ENCODE measurements at regions of chr11 and their contacts with region 1.

Region 1: GRCh38 chr11:6377902-6378639 is 12.2 kb upstream of the SMPD1 start:
- H3K4me3 ChIP-seq: no peak overlapping the region
- H3K27ac ChIP-seq: no peak overlapping the region
- H3K4me1 ChIP-seq: no peaks in the 10 kb centered on the region
- CTCF ChIP-seq: no peak

Region 2: DNA sequence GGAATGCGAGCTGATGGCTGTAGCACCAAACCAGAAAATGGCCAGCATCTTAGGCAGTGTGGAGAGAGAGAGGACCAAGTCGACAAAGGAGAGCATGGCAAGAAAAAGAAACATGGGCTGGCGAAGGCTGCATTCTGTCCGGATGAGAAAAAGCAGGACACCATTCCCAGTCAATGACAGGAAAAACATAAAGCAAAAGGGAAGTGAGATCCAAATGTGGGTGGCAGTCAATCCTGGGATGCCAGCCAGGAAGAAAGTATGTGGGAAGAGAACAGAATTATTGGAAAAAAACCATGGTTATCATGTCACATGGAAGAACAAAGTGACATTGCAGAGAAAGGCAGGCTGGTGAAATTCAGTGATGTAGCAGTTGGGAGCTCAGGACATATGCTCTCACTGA is 310.6 kb before region 1 on chr11:
- CTCF ChIA-PET with region 1: no interaction called
- POLR2A ChIA-PET with region 1: no interaction called
- H3K4me3 ChIP-seq: no peak overlapping the region
- H3K27ac ChIP-seq: no peak overlapping the region
- H3K4me1 ChIP-seq: no peaks in the 10 kb centered on the region
- CTCF ChIP-seq: no peak

Region 3: GRCh38 chr11:6353367-6353987 is 24.6 kb before region 1 on chr11:
- CTCF ChIA-PET with region 1: interaction called, 20 read pairs
- POLR2A ChIA-PET with region 1: no interaction called
- H3K4me3 ChIP-seq: no peak overlapping the region
- H3K27ac ChIP-seq: no peak overlapping the region
- H3K4me1 ChIP-seq: no peaks in the 10 kb centered on the region
- CTCF ChIP-seq: peak; percentile 86

Region 4: GRCh38 chr11:6400431-6401345 is 22.6 kb after region 1 on chr11:
- CTCF ChIA-PET with region 1: interaction called, 14 read pairs
- POLR2A ChIA-PET with region 1: no interaction called
- H3K4me3 ChIP-seq: no peak overlapping the region
- H3K27ac ChIP-seq: no peak overlapping the region
- H3K4me1 ChIP-seq: no peaks in the 10 kb centered on the region
- CTCF ChIP-seq: no peak

Region 5: GRCh38 chr11:6481012-6481923 is 103.2 kb after region 1 on chr11 and contains the starts of genes ARFIP2 and TIMM10B:
- CTCF ChIA-PET with region 1: interaction called, 27 read pairs
- POLR2A ChIA-PET with region 1: interaction called, 11 read pairs
- H3K4me3 ChIP-seq: peak within 1 kb of the TSS; percentile 73
- H3K27ac ChIP-seq: peak within 1 kb of the TSS; percentile 28
- H3K4me1 ChIP-seq: no peaks in the 10 kb centered on the region
- CTCF ChIP-seq: no peak

Region 6: GRCh38 chr11:6531267-6531752 is 153.2 kb after region 1 on chr11:
- CTCF ChIA-PET with region 1: interaction called, 32 read pairs
- POLR2A ChIA-PET with region 1: no interaction called
- H3K4me3 ChIP-seq: no peak overlapping the region
- H3K27ac ChIP-seq: no peak overlapping the region
- H3K4me1 ChIP-seq: no peaks in the 10 kb centered on the region
- CTCF ChIP-seq: 0 out of 2 replicates have a peak, but pooled peaks have one; percentile 43

Region 7: DNA sequence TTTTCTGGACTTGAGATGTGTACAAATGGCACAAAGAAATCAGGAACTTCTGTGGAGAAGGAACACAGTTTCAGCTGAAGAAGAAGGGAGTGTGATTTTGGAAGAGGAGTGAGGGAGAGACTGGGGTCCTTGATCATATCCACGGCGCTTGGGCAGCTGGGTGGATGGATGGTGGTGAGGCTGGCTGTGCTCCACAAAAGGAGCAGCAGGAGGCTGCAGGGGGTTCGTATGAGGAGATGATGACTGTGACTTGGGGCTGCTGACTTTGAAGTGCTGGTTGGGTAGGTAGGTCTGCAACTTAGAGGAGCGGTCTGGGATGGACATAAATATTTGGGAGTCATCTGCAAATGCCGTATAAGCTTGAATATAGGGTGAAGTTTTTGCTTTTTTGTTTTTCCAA is 278.9 kb after region 1 on chr11:
- CTCF ChIA-PET with region 1: no interaction called
- POLR2A ChIA-PET with region 1: no interaction called
- H3K4me3 ChIP-seq: no peak overlapping the region
- H3K27ac ChIP-seq: no peak overlapping the region
- H3K4me1 ChIP-seq: no peaks in the 10 kb centered on the region
- CTCF ChIP-seq: no peak

Region 8: DNA sequence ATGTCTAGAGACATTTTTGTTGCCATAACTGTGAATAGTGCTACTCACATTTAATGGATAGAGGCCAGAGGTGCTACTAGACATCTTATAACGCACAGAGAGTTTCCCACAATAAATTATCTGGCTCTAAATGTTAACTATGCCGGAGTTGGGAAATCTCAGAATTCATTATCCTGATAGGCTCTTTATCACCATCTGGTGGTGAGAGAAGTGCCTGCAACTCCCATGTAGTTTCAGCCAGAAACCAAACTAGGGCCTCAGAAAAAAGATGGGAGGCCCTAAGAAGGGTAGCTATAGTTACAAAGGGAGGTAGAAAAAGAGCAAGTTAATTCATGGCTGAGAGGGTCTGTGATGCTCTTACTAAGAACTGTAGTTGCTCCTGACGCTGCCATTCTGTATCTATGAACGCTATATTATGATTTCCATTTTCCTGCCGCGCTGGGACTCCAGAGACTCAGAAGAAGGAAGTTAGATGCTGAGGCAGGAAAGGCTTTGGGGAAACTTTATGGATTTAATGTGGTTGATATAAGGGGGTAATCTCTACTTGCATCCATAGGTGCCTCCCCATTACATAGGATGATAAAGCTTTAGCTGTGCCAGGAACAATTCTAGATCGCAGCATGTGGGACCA is 327.9 kb after region 1 on chr11:
- CTCF ChIA-PET with region 1: interaction called, 53 read pairs
- POLR2A ChIA-PET with region 1: no interaction called
- H3K4me3 ChIP-seq: no peak overlapping the region
- H3K27ac ChIP-seq: no peak overlapping the region
- H3K4me1 ChIP-seq: no peaks in the 10 kb centered on the region
- CTCF ChIP-seq: peak; percentile 18; the same call in 1 of the 2 replicates